ENCODE measurements at regions of chr10 and their contacts with region 1.

Region 1: DNA sequence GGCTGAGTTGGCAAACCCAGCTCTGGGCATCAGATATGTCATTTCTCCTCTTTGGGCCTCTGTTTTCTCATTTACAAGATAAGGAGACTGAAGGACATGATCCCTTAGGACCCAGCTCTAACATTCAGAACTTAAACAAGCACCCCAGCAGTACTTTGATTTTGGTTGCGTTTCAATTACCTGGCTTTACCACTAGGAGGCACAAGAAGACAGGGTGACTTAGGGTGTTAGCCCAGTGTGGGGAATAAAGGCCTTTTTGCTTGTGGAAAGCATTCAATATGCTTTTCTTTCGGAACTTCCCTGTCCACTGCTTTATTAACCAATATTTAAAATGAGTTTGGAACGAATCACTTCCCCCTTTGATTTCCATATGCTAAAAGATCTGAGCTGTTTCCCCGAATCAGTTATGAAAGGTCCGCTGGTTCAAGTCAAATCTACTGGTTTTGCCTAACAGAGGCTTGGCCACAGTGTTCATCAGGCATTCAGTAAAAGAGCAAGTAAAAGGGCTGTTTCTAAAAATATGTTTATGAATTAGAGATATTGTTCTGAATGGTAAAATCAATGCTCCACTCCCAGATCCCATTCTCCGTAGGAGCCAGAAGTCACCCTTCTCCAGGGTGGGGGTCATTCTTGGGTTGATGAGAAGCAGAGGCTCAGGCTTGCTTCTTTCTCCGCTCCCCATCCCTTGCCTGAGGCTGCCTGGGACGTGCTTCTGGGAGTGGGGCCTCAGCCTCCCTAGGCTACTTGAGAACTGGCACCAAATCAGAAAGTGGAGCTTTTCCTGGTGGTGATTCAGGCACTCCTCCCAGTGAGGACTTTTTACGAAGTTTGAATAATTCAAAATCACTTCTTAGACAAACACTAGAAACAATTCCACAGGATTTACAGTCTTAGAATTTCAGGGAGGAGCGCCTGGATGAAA is 105.5 kb downstream of the MYOF start:
- DNase-seq: peak; percentile 82

Region 2: DNA sequence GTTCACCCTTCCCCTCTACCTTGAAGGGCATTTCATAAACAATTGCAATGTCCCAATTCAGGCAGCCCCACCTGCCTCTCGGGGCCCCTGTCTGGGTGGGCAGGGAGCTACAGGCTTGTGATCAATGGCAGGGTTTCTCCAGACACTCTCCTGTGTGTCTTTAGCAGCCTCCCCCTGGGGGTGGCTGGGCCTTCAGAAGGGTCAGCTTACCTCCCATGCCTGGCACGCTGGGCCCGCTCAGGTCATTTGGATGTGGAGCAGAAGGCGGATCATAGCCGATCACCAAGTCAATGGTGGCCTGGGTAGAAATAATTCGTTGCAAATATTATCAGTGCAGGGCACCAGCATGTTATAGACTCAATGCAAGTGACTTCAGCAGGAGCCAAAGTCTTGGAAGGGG is 49.2 kb after region 1 on chr10:
- intact Hi-C with region 1: loop called in 1 of 2 experiments (anchors 5 kb)
- DNase-seq: peak; percentile 59

Region 3: DNA sequence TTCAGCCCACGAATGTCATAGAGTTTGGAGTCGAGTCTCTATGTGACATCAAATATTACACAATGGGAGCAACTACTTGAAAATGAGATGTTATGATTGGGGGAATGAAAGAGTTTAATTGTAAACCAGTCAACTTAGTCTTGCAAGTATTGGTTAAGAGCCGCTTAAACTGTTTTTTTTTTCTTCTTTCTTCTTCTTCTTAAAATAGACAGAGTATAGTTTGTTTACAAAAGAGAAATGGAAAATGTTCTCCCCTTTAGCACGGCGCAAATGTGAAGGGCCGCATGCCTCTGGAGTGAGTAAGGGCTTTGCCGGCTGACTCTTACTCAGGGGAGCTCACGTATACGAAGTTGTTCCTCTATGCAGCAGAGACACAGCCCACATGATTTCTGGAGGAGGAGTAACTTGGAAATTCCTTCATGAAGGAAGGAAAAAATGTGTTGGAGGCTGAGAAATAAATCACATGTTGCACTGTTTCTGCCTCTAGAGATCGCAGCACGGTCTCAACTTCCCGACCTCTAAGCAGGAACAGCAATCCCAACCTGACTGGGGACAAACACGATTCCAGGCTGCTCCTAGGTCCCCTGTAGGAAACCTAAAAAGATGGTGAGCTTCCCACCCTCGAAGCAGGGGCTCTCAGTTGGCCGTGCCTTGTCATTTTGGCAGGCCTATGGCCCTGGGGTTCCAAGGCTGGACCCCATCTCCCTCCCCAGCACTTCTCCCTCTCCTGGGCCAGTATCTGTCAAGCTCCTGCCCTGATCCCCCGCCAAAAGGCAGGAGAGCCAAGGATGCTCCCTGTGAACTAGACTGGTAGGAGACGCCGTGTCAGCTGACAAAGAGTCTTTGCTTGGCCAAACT is 60.7 kb after region 1 on chr10:
- intact Hi-C with region 1: loop called in 1 of 2 experiments (anchors 5 kb)
- DNase-seq: peak; percentile 94

Region 4: GRCh38 chr10:93482145-93482834 is 105.7 kb after region 1 on chr10 and contains the start of gene MYOF:
- intact Hi-C with region 1: loop called (anchors 2 kb)
- DNase-seq: peak; percentile 86
- total RNA-seq, gene MYOF: 182 to 227 TPM

Region 5: GRCh38 chr10:93838278-93838677 is 461.6 kb after region 1 on chr10:
- intact Hi-C with region 1: no loop called
- DNase-seq: no peak